ENCODE measurements at regions of chr6 and their contacts with region 1.

Region 1: GRCh38 chr6:148776321-148777308 is 29.8 kb downstream of the UST start:
- DNase-seq: no peak
- H3K4me3 ChIP-seq: no peak overlapping the region
- H3K27ac ChIP-seq: no peak overlapping the region
- H3K4me1 ChIP-seq: no peaks in the 10 kb centered on the region
- CTCF ChIP-seq: no peak

Region 2: GRCh38 chr6:148915810-148916209 is 139.2 kb after region 1 on chr6:
- CTCF ChIA-PET with region 1: interaction called, 10 read pairs
- POLR2A ChIA-PET with region 1: no interaction called
- intact Hi-C with region 1: no loop called
- DNase-seq: no peak
- H3K4me3 ChIP-seq: no peak overlapping the region
- H3K27ac ChIP-seq: no peak overlapping the region
- H3K4me1 ChIP-seq: no peaks in the 10 kb centered on the region
- CTCF ChIP-seq: no peak